ENCODE measurements at regions of chr5 and their contacts with region 1.

Region 1: GRCh38 chr5:132445930-132446329 is 44.6 kb downstream of the IRF1 start:
- DNase-seq: no peak
- H3K4me3 ChIP-seq: no peak overlapping the region
- H3K4me3 Mint-ChIP-seq: no peak overlapping the region
- H3K27ac Mint-ChIP-seq: peak overlapping the region; percentile 85
- H3K4me1 ChIP-seq: peaks cover 38% of the 10 kb centered on the region
- H3K4me1 Mint-ChIP-seq: peaks cover 24% of the 10 kb centered on the region
- H3K27me3 ChIP-seq: no peaks in the 10 kb centered on the region
- H3K27me3 Mint-ChIP-seq: no peaks in the 10 kb centered on the region
- CTCF ChIP-seq: no peak

Region 2: DNA sequence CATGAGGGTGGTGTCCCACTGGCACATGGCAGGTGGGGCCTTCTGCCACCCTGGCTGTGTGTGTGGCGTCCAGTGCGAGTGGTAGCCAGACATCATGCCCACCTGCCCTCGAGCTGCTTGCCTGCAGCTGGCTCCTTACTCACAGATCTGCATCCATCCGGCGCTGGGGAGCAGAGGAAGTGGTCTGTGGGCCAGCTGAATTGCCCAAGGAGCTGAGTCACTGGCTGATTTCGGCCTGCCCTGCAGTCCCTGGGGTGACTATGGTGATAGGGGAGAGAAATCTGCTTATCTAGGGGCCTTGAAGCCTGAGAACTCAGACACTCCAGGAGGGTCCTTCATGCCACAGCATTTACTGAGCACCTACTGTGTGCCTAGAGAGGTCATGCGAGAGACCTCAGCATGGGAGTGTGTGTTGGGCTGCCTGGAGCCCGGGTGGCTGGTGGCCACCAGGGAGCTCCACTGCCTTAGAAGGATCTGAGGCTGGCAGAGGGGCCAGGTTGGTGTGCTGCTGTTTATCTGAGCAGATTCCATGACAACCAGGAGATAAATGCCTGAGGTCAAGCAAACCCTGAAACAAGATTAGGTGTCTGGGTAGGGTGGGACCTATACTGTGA is 19.3 kb before region 1 on chr5:
- CTCF ChIA-PET with region 1: interaction called, 3 read pairs
- POLR2A ChIA-PET with region 1: no interaction called
- intact Hi-C with region 1: loop called (anchors 1 kb)
- DNase-seq: peak in 1 of 2 experiments; percentile 58
- H3K4me3 ChIP-seq: no peak overlapping the region
- H3K4me3 Mint-ChIP-seq: no peak overlapping the region
- H3K27ac Mint-ChIP-seq: peak overlapping the region; percentile 22
- H3K4me1 ChIP-seq: peaks cover 56% of the 10 kb centered on the region
- H3K4me1 Mint-ChIP-seq: peaks cover 44% of the 10 kb centered on the region
- H3K27me3 ChIP-seq: no peaks in the 10 kb centered on the region
- H3K27me3 Mint-ChIP-seq: no peaks in the 10 kb centered on the region
- CTCF ChIP-seq: peak in 1 of 2 experiments; percentile 56